Heart left ventricle (tissue), 16 donors: ENCODE measurements at regions of chr4 and their contacts with region 1.

Region 1: DNA sequence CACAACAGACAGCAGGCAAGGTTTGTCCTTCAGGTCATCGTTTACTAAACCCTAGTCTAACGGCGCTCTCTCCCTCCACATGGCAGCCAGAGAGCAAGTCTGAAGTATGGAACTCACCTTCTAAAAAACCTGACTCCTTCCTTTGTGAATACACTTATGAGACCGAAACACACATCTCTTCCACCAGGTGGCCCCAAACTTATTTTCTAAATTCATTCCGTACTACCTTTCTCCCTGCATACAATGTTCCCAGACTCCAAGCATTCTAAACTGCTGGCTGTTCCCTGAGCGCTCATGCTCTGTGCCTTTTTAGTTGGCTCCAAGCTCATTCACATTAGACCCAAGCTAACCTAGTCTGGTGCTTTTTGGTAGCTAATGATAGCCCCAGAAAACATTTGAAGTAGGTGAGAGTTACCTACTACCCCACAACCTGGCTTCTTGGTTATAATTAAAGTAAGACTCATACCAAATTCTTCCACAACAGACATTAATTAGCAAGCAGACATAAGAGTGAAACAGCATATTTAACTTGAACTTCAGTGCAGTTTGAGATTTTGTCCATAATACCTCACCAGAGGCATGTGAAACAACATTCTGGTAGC is 67.6 kb upstream of the DCLK2 start:
- DNase-seq: peak in 3 of 5 donors; percentile 27 to 40 (median 33)
- ATAC-seq: peak; percentile 78 to 84 (median 84)
- H3K4me3 ChIP-seq: no peak overlapping the region
- H3K27ac ChIP-seq: no peak overlapping the region
- H3K4me1 ChIP-seq: peaks cover 0 to 23% (median 10%) of the 10 kb centered on the region in 12 donors
- H3K27me3 ChIP-seq: no peaks in the 10 kb centered on the region
- CTCF ChIP-seq: peak; percentile 37 to 73 (median 60)
- POLR2A ChIP-seq: no peak

Region 2: GRCh38 chr4:149933883-149934282 is 76.7 kb before region 1 on chr4:
- intact Hi-C with region 1: no loop called
- DNase-seq: no peak
- ATAC-seq: peak in 2 of 4 donors; percentile 54 to 55
- H3K4me3 ChIP-seq: no peak overlapping the region
- H3K27ac ChIP-seq: no peak overlapping the region
- H3K4me1 ChIP-seq: no peaks in the 10 kb centered on the region
- H3K27me3 ChIP-seq: no peaks in the 10 kb centered on the region
- CTCF ChIP-seq: no peak
- POLR2A ChIP-seq: no peak

Region 3: DNA sequence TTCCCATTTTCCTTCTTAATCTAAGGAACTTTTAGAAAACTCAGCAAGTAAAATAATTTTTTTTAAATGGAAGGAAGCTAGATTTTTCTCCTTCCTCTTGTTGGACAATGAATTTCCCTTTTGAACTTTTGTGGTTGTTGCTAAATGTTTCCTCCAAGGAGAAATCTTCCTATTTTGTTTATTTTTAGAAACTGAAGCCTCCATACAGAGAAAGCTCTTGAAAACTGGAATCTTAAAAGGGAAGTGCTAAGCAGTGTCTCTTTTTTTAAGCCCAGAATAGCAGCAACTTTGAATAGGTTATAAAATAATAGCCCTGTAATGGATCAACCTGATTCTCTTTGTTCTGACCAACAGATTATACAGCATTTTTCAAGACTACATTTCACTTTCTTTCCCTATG is 52.5 kb after region 1 on chr4:
- intact Hi-C with region 1: loop called in 1 of 10 experiments (anchors 5 kb)
- DNase-seq: no peak
- ATAC-seq: peak in 1 of 4 donors; percentile 54
- H3K4me3 ChIP-seq: no peak overlapping the region
- H3K27ac ChIP-seq: peak overlapping the region in 5 of 12 donors; percentile 9 to 65 (median 31)
- H3K4me1 ChIP-seq: peaks cover 0 to 27% (median 15%) of the 10 kb centered on the region in 12 donors
- H3K27me3 ChIP-seq: no peaks in the 10 kb centered on the region
- CTCF ChIP-seq: no peak
- POLR2A ChIP-seq: no peak

Region 4: GRCh38 chr4:150209140-150209829 is 198.7 kb after region 1 on chr4:
- intact Hi-C with region 1: loop called in 8 of 10 experiments (anchors 1 to 5 kb)
- DNase-seq: peak; percentile 63 to 75 (median 68)
- ATAC-seq: peak; percentile 71 to 84 (median 79)
- H3K4me3 ChIP-seq: no peak overlapping the region
- H3K27ac ChIP-seq: no peak overlapping the region
- H3K4me1 ChIP-seq: peaks cover 0 to 54% (median 18%) of the 10 kb centered on the region in 12 donors
- H3K27me3 ChIP-seq: no peaks in the 10 kb centered on the region
- CTCF ChIP-seq: peak; percentile 41 to 74 (median 64)
- POLR2A ChIP-seq: no peak

Region 5: GRCh38 chr4:150217192-150217591 is 206.6 kb after region 1 on chr4:
- intact Hi-C with region 1: loop called in 3 of 10 experiments (anchors 5 kb)
- DNase-seq: no peak
- ATAC-seq: peak in 3 of 4 donors; percentile 51 to 63 (median 52)
- H3K4me3 ChIP-seq: no peak overlapping the region
- H3K27ac ChIP-seq: no peak overlapping the region
- H3K4me1 ChIP-seq: peaks cover 0 to 27% (median 5%) of the 10 kb centered on the region in 12 donors
- H3K27me3 ChIP-seq: no peaks in the 10 kb centered on the region
- CTCF ChIP-seq: peak in 9 of 12 donors; percentile 13 to 49 (median 25)
- POLR2A ChIP-seq: no peak

Region 6: GRCh38 chr4:150242820-150243458 is 232.3 kb after region 1 on chr4:
- intact Hi-C with region 1: loop called in 8 of 10 experiments (anchors 1 to 5 kb)
- DNase-seq: peak in 1 of 5 donors; percentile 47
- ATAC-seq: peak in 3 of 4 donors; percentile 46 to 52 (median 51)
- H3K4me3 ChIP-seq: no peak overlapping the region
- H3K27ac ChIP-seq: no peak overlapping the region
- H3K4me1 ChIP-seq: no peaks in the 10 kb centered on the region
- H3K27me3 ChIP-seq: no peaks in the 10 kb centered on the region
- CTCF ChIP-seq: peak; percentile 71 to 91 (median 88)
- POLR2A ChIP-seq: no peak